GM12878 (cell line): ENCODE measurements at regions of chr9 and their contacts with region 1.

Region 1: DNA sequence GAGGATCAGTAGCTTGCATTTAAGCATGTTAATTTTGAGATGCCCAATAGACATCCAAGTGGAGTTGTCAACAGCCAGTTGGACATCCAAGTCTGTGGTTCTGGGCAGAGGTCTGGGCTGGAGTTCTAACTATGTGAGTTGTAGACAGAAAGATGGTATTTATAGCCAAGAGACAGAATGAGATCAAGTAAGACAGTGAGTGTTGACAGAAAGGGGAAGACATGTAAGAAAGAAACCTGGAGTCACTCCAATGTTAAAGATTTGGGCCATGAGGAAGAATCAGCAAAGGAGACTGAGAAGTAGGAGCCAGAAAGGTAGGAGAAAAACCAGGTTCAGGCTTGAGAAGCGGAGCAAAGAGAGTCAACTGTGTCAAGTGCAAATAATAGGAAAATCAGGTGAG is 95.5 kb upstream of the PUM3 start:
- DNase-seq: no peak
- ATAC-seq: no peak
- H3K4me3 ChIP-seq: no peak overlapping the region
- H3K27ac ChIP-seq: no peak overlapping the region
- H3K4me1 ChIP-seq: no peaks in the 10 kb centered on the region
- H3K27me3 ChIP-seq: peaks cover 0 to 2% of the 10 kb centered on the region in 2 experiments; a peak in 1 of 4 replicates
- CTCF ChIP-seq: no peak
- EP300 ChIP-seq: no peak
- POLR2A ChIP-seq: no peak
- RAD21 ChIP-seq: no peak

Region 2: GRCh38 chr9:2838371-2839000 is 100.9 kb before region 1 on chr9:
- CTCF ChIA-PET with region 1: no interaction called
- POLR2A ChIA-PET with region 1: no interaction called
- RAD21 ChIA-PET with region 1: no interaction called
- SMC1A ChIA-PET with region 1: no interaction called
- in situ Hi-C with region 1: no loop called
- intact Hi-C with region 1: no loop called
- DNase-seq: no peak
- ATAC-seq: no peak
- H3K4me3 ChIP-seq: peak overlapping the region; percentile 1; the same call in 1 of the 2 replicates
- H3K27ac ChIP-seq: no peak overlapping the region
- H3K4me1 ChIP-seq: peaks cover 5% of the 10 kb centered on the region
- H3K27me3 ChIP-seq: no peaks in the 10 kb centered on the region
- CTCF ChIP-seq: no peak
- EP300 ChIP-seq: no peak
- POLR2A ChIP-seq: no peak
- RAD21 ChIP-seq: no peak

Region 3: GRCh38 chr9:2849941-2850340 is 89.4 kb before region 1 on chr9:
- CTCF ChIA-PET with region 1: no interaction called
- POLR2A ChIA-PET with region 1: no interaction called
- RAD21 ChIA-PET with region 1: no interaction called
- SMC1A ChIA-PET with region 1: no interaction called
- in situ Hi-C with region 1: no loop called
- intact Hi-C with region 1: no loop called
- DNase-seq: no peak
- ATAC-seq: no peak
- H3K4me3 ChIP-seq: no peak overlapping the region
- H3K27ac ChIP-seq: no peak overlapping the region
- H3K4me1 ChIP-seq: no peaks in the 10 kb centered on the region
- H3K27me3 ChIP-seq: no peaks in the 10 kb centered on the region
- CTCF ChIP-seq: no peak
- EP300 ChIP-seq: no peak
- POLR2A ChIP-seq: no peak
- RAD21 ChIP-seq: no peak

Region 4: DNA sequence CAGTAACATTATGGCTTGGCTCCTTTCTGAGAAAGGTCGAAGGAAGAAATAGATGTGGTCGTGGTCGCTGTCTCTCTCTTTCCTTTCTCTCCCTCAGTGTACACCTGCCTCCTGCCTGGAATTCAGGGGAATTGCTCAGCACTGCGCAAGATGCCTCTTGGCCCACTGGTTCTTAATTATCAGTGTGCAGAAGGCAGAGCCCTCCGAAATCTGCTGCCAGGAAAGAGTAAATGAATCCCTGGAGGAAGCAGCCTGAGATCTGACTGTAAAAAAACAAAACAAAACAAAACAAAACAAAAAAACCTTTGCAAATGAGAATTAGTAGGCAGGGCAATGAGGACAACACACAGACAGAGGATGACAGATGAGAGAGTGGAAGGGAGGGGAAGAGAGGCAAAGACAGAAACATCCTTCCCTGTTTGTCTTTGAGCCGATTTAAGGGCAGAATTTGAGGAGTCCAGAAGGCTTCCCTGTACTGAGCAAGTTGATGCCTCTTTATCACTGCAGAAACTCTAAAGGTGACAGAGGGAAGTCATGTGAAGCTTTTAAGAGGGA is 18.4 kb after region 1 on chr9:
- CTCF ChIA-PET with region 1: no interaction called
- POLR2A ChIA-PET with region 1: no interaction called
- RAD21 ChIA-PET with region 1: no interaction called
- SMC1A ChIA-PET with region 1: no interaction called
- in situ Hi-C with region 1: no loop called
- intact Hi-C with region 1: loop called (anchors 2 kb)
- DNase-seq: no peak
- ATAC-seq: no peak
- H3K4me3 ChIP-seq: no peak overlapping the region
- H3K27ac ChIP-seq: no peak overlapping the region
- H3K4me1 ChIP-seq: no peaks in the 10 kb centered on the region
- H3K27me3 ChIP-seq: no peaks in the 10 kb centered on the region; a peak in 1 of 4 replicates
- CTCF ChIP-seq: no peak
- EP300 ChIP-seq: no peak
- POLR2A ChIP-seq: no peak
- RAD21 ChIP-seq: no peak

Region 5: GRCh38 chr9:4214486-4214885 is 1275.1 kb after region 1 on chr9:
- CTCF ChIA-PET with region 1: no interaction called
- POLR2A ChIA-PET with region 1: no interaction called
- RAD21 ChIA-PET with region 1: no interaction called
- SMC1A ChIA-PET with region 1: no interaction called
- in situ Hi-C with region 1: no loop called
- intact Hi-C with region 1: no loop called
- DNase-seq: no peak
- ATAC-seq: no peak
- H3K4me3 ChIP-seq: no peak overlapping the region
- H3K27ac ChIP-seq: no peak overlapping the region
- H3K4me1 ChIP-seq: no peaks in the 10 kb centered on the region
- H3K27me3 ChIP-seq: no peaks in the 10 kb centered on the region
- CTCF ChIP-seq: no peak
- EP300 ChIP-seq: no peak
- POLR2A ChIP-seq: no peak
- RAD21 ChIP-seq: no peak